Ascending aorta (tissue), 2 donors: ENCODE measurements at regions of chr10 and their contacts with region 1.

Region 1: GRCh38 chr10:100009793-100010676 is at the start of gene DNMBP:
- DNase-seq: peak; percentile 14 to 89
- H3K4me3 ChIP-seq: peak within 1 kb of the TSS; percentile 78 to 98
- H3K27ac ChIP-seq: peak within 1 kb of the TSS; percentile 65 to 80
- H3K4me1 ChIP-seq: peaks cover 3 to 19% of the 10 kb centered on the region in 2 donors
- H3K27me3 ChIP-seq: no peaks in the 10 kb centered on the region
- CTCF ChIP-seq: peak; percentile 35 to 85 (median 49)
- total RNA-seq, gene DNMBP: 15.9 TPM

Region 2: DNA sequence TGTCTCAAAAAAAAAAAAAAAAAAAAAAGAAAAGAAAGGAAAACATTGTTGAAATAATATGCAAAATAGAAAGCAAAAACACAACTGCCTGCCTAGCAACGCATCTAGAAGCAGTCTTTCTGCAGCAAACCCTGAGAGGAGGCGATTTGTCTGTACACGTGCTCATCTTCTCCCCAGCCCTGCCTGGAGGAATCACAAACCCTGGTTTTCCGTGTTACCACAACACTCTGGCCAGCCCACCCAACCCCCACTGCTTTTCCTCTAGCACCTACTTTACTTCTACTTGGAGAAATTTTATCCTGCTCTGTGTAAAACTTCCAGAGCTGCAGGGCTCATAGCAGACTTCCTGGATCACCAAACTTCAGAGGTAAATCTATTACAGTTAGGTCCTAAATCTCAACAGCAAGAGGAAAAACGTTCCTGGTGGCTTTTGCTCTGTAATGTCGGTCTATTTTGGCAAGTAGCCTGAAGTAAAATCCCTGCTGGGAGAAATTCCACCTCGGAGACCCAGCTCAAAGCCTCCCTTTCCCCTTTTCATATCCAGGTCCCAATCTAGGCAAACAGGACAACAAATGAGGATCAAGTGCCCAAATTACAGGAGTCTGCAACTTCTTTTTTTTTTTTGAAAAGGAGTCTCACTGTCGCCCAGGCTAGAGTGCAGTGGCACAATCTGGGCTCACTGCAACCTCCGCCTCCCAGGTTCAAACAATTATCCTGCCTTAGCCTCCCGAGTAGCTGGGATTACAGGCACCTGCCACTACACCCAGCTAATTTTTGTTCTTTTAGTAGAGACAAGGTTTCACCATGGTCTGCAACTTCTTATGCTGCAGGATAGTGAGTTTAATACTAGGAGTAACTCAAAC is 91.8 kb before region 1 on chr10:
- intact Hi-C with region 1: loop called (anchors 10 kb)
- DNase-seq: no peak
- H3K4me3 ChIP-seq: peak overlapping the region; percentile 32 to 56
- H3K27ac ChIP-seq: peak overlapping the region; percentile 19 to 54
- H3K4me1 ChIP-seq: peaks cover 0 to 3% of the 10 kb centered on the region in 2 donors
- H3K27me3 ChIP-seq: no peaks in the 10 kb centered on the region
- CTCF ChIP-seq: no peak

Region 3: GRCh38 chr10:99958302-99958701 is 51.7 kb before region 1 on chr10:
- intact Hi-C with region 1: no loop called
- DNase-seq: no peak
- H3K4me3 ChIP-seq: no peak overlapping the region
- H3K27ac ChIP-seq: no peak overlapping the region
- H3K4me1 ChIP-seq: no peaks in the 10 kb centered on the region
- H3K27me3 ChIP-seq: no peaks in the 10 kb centered on the region
- CTCF ChIP-seq: no peak

Region 4: GRCh38 chr10:99976886-99977665 is 33.0 kb before region 1 on chr10:
- intact Hi-C with region 1: loop called (anchors 5 kb)
- DNase-seq: no peak
- H3K4me3 ChIP-seq: no peak overlapping the region
- H3K27ac ChIP-seq: peak overlapping the region; percentile 49 to 63
- H3K4me1 ChIP-seq: peaks cover 0 to 2% of the 10 kb centered on the region in 2 donors
- H3K27me3 ChIP-seq: no peaks in the 10 kb centered on the region
- CTCF ChIP-seq: no peak